ENCODE measurements at regions of chr22 and their contacts with region 1.

Region 1: DNA sequence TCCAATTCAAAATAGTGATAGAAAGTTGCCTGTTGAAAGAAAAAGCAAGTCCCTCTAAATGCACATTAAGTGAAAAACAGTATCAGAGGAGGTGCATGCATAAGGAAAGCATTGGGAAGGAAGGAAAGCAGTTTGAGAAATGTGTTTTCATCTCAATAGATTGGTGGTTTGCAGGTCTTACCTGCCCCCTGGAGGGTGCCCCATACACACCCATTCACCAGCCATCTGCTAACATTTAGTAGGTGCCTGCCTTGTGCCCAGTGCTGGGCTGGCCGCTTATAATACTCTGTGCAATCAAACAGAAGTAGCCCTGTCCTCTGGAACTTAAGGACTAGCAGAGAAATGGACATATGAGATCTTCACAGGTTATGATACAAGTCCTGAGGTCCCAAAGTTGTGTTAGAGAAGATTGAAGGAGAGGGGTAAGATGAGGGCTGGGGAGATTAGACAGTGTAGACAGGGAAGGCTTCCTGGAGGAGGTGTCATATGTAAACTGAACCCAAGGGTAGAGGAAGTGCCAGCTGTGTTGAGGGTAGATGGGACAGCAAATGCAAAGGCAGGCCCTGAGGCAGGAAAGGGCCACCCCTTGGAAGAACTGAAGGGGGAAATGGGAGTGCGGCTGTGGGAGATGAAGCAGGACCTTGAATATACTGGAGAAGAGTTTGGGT is 184.2 kb downstream of the MN1 start:
- DNase-seq: no peak
- H3K4me3 ChIP-seq: no peak overlapping the region
- H3K27ac ChIP-seq: no peak overlapping the region
- H3K4me1 ChIP-seq: peaks cover 8% of the 10 kb centered on the region
- H3K27me3 ChIP-seq: no peaks in the 10 kb centered on the region
- CTCF ChIP-seq: no peak
- POLR2A ChIP-seq: no peak

Region 2: GRCh38 chr22:27416511-27417420 is 200.6 kb before region 1 on chr22:
- intact Hi-C with region 1: loop called (anchors 10 kb)
- DNase-seq: no peak
- H3K4me3 ChIP-seq: no peak overlapping the region
- H3K27ac ChIP-seq: no peak overlapping the region
- H3K4me1 ChIP-seq: peaks cover 14% of the 10 kb centered on the region
- H3K27me3 ChIP-seq: no peaks in the 10 kb centered on the region
- CTCF ChIP-seq: no peak
- POLR2A ChIP-seq: no peak

Region 3: DNA sequence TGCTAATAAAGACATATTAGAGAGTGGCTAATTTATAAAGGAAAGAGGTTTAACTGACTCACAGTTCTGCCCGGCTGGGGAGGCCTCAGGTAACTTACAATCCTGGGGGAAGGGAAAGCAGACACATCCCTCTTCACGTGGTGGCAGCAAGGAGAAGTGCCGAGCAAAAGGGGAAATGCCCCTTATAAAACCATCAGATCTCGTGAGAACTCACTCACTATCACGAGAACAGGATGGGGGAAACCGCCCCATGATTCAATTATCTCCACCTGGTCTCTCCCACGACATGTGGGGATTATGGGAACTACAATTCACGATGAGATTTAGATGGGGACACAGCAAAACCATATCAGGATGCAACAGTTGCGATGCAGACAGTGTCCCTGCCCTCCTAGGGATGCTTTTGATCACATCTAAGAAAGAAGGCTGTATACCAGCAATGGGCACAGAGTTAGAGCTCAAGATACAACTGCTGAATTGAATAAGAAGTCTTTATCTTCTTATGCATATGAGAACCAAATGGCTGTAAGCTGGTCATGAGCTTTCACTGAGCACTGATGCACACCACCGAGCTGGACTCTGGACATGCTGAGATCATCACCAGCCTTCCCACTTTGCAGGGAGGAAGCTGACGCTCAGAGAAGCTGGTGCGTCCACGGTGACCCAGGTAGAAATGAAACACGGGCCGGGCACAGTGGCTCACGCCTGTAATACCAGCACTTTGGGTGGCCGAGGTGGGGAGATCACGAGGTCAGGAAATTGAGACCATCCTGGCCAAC is 71.0 kb before region 1 on chr22:
- intact Hi-C with region 1: no loop called
- DNase-seq: no peak
- H3K4me3 ChIP-seq: no peak overlapping the region
- H3K27ac ChIP-seq: no peak overlapping the region
- H3K4me1 ChIP-seq: no peaks in the 10 kb centered on the region
- H3K27me3 ChIP-seq: no peaks in the 10 kb centered on the region
- CTCF ChIP-seq: no peak
- POLR2A ChIP-seq: no peak

Measured in vagina (tissue), 2 donors.